ENCODE measurements at regions of chr2 and their contacts with region 1.

Region 1: GRCh38 chr2:37993143-37993542 is 68.1 kb downstream of the RMDN2 start:
- DNase-seq: no peak
- H3K4me3 Mint-ChIP-seq: peak overlapping the region; percentile 39
- H3K27ac Mint-ChIP-seq: peak overlapping the region; percentile 80
- H3K4me1 Mint-ChIP-seq: peaks cover 36% of the 10 kb centered on the region
- H3K27me3 Mint-ChIP-seq: no peaks in the 10 kb centered on the region
- CTCF ChIP-seq: no peak

Region 2: GRCh38 chr2:38037757-38038621 is 44.8 kb after region 1 on chr2:
- CTCF ChIA-PET with region 1: interaction called, 3 read pairs
- intact Hi-C with region 1: loop called (anchors 5 kb)
- DNase-seq: peak; percentile 27
- H3K4me3 Mint-ChIP-seq: peak overlapping the region; percentile 66
- H3K27ac Mint-ChIP-seq: no peak overlapping the region
- H3K4me1 Mint-ChIP-seq: no peaks in the 10 kb centered on the region
- H3K27me3 Mint-ChIP-seq: peaks cover 25% of the 10 kb centered on the region
- CTCF ChIP-seq: no peak

Region 3: GRCh38 chr2:38064801-38065501 is 71.8 kb after region 1 on chr2:
- CTCF ChIA-PET with region 1: no interaction called
- intact Hi-C with region 1: loop called (anchors 5 kb)
- DNase-seq: no peak
- H3K4me3 Mint-ChIP-seq: no peak overlapping the region
- H3K27ac Mint-ChIP-seq: no peak overlapping the region
- H3K4me1 Mint-ChIP-seq: peaks cover 11% of the 10 kb centered on the region
- H3K27me3 Mint-ChIP-seq: no peaks in the 10 kb centered on the region
- CTCF ChIP-seq: no peak

Region 4: DNA sequence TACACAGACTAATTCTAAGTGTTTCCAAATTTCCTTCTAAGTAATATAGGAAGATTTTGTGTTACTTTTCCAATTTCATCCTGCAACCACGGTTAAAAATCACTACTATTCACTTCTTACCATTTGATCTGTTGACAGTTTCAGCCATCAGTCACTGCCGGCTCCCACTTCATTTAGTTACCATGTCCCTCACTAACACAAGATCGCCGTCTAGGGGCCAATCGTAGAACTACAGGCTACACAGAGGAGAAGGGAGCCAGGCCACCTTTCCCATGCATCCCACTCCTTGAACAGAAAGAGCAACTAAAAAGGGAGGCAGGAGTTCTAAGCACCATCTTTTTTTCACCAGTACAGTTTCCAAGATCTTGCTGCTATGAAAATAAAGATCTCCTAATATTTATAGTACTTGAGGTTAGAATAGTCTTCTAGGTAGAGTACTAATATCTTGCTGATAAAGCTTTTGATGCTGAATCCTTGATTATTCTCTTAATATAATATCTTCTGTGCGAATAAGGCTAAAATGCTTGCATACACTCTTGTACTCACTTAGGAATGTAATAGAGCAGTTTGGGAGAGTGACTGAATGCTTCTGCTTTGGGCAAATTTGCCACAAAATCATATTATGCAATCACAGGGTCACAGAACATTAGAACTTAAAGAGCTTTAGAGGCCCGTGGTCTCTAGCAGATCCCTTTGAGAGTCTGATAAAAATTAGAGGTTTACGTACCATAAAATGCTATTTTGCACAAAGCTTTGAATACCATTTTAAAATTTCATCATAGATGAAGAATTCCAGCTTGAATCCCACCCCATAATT is 122.3 kb after region 1 on chr2:
- CTCF ChIA-PET with region 1: interaction called, 7 read pairs
- intact Hi-C with region 1: loop called (anchors 2 kb)
- DNase-seq: peak; percentile 89
- H3K4me3 Mint-ChIP-seq: no peak overlapping the region
- H3K27ac Mint-ChIP-seq: no peak overlapping the region
- H3K4me1 Mint-ChIP-seq: peaks cover 66% of the 10 kb centered on the region
- H3K27me3 Mint-ChIP-seq: no peaks in the 10 kb centered on the region
- CTCF ChIP-seq: peak; percentile 88

Region 5: GRCh38 chr2:38806015-38806732 is 813.0 kb after region 1 on chr2:
- CTCF ChIA-PET with region 1: no interaction called
- intact Hi-C with region 1: no loop called
- DNase-seq: no peak
- H3K4me3 Mint-ChIP-seq: no peak overlapping the region
- H3K27ac Mint-ChIP-seq: no peak overlapping the region
- H3K4me1 Mint-ChIP-seq: no peaks in the 10 kb centered on the region
- H3K27me3 Mint-ChIP-seq: no peaks in the 10 kb centered on the region
- CTCF ChIP-seq: no peak